Endothelial cell of umbilical vein (primary cell): ENCODE measurements at regions of chr13 and their contacts with region 1.

Region 1: DNA sequence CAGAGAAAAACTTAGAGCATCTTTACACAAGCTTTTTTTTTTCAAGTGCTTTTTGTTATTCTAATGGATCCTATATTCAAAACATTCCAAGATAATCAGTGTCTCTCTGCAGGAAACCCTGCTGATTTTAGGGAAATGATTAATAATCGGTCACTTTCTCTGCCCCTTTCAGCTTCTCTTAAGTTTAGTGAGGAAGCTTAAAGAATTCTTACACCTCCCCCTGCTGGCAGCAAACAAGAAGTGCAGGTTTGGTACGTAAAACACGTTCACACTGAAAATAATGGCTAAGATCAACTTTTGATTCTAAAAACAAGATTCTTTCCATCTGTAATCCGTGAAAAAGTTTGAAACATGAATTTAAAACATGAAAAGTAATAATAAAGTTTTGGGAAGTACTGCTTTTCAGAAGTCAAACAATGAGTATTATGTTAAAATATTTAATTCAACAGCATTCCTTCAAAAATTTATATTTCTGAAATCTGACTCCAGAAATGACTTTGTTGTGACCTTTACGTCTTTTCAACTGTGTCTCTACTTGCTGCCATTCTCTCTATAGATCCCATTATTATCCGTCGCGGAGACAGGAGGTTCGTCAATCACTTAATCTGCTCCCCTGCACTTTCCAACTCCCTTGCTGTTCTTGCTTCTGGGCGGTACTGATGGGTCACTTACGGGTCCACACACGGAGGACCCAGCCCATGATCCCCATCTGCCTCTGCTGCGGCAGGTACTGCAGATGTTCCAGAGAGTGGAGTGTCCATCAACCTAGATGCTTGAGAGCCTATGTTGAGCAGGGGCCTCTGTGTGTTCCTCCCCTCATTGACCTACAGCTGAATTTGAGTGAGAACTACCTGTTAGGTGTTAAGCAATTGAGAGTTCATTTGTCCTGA is 203.1 kb upstream of the EDNRB start:
- DNase-seq: peak; percentile 82
- H3K4me3 ChIP-seq: no peak overlapping the region
- H3K27ac ChIP-seq: no peak overlapping the region
- H3K4me1 ChIP-seq: peaks cover 8% of the 10 kb centered on the region
- H3K27me3 ChIP-seq: peaks cover 0 to under 1% of the 10 kb centered on the region in 2 experiments
- CTCF ChIP-seq: peak; percentile 62 to 68
- POLR2A ChIP-seq: no peak

Region 2: DNA sequence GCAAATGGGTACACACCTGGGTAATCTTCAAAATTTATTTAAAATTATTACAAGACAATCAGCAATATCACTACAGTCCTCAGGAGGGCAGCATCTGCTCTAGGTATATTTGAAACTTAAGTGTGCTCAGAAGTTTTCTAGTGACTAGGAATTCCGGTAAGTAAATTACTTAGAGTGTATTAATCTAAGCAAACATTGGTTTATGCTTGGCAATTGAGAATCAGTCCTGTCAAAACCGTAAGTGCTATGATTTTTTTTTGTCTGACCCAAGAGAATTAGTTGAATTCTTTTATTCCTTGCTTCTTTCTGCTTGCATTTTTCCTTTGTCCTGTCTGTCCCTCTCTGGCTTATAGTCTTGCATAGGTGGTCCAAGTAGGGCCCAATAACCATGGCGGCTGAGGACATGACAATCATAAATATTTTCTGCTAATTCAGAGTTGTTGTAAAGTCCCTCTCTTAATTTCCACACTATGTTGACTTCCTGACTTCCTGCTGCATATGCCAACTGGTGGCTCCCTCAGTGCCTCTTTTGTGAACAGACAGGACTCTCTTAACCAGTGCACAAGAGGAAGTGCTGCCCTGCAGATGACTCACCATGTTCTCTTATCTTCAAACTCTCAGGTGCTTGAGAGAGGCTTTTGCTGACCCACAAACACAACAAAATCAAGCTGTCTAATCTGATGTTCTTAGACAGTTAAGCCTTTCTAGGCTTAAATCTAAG is 342.0 kb before region 1 on chr13:
- CTCF ChIA-PET with region 1: interaction called, 149 read pairs
- POLR2A ChIA-PET with region 1: no interaction called
- dilution Hi-C with region 1: no loop called
- intact Hi-C with region 1: loop called (anchors 1 kb)
- DNase-seq: peak; percentile 86
- H3K4me3 ChIP-seq: no peak overlapping the region
- H3K27ac ChIP-seq: peak overlapping the region; percentile 46
- H3K4me1 ChIP-seq: peaks cover 8% of the 10 kb centered on the region
- H3K27me3 ChIP-seq: no peaks in the 10 kb centered on the region
- CTCF ChIP-seq: peak; percentile 38 to 45
- POLR2A ChIP-seq: no peak

Region 3: GRCh38 chr13:77810430-77810829 is 311.3 kb before region 1 on chr13:
- CTCF ChIA-PET with region 1: interaction called, 109 read pairs
- POLR2A ChIA-PET with region 1: no interaction called
- dilution Hi-C with region 1: no loop called
- intact Hi-C with region 1: loop called (anchors 1 kb)
- DNase-seq: peak; percentile 45
- H3K4me3 ChIP-seq: no peak overlapping the region
- H3K27ac ChIP-seq: no peak overlapping the region
- H3K4me1 ChIP-seq: no peaks in the 10 kb centered on the region
- H3K27me3 ChIP-seq: peaks cover 5 to 8% of the 10 kb centered on the region in 2 experiments
- CTCF ChIP-seq: peak; percentile 26 to 43
- POLR2A ChIP-seq: no peak

Region 4: DNA sequence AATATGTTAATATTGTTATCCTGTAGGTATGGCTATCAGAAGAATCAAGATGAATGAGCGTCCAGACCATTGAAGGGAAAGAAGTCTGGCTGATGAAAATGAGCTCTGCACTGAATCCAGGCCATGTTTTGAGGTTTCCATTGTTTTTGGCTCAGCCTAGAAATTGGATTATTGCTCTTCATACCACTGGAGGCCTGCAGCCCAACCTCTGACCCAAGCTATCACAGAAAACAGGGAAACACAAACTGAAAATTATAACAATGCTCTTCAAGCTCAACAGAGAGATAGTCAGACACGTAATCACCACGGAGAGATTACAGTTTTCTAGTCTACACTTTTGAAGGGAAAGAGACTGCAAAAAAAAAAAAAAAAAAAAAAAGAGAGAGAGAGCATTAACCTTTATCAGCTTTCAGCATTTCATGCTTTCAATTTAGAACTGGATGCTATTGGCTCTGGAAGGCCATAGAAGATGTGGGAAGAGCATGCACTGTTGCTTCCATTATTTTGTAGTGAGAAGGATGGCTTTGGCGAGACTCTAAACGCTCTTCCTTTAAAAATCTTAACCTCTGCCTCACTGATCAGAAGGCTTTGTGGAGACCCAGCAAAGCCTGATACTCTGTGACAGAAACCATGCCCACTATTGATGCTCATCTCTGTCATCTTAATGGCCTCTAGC is 213.9 kb before region 1 on chr13:
- CTCF ChIA-PET with region 1: interaction called, 10 read pairs
- POLR2A ChIA-PET with region 1: no interaction called
- dilution Hi-C with region 1: no loop called
- intact Hi-C with region 1: no loop called
- DNase-seq: peak; percentile 98
- H3K4me3 ChIP-seq: no peak overlapping the region
- H3K27ac ChIP-seq: peak overlapping the region; percentile 50
- H3K4me1 ChIP-seq: peaks cover 6% of the 10 kb centered on the region
- H3K27me3 ChIP-seq: no peaks in the 10 kb centered on the region
- CTCF ChIP-seq: no peak
- POLR2A ChIP-seq: no peak

Region 5: DNA sequence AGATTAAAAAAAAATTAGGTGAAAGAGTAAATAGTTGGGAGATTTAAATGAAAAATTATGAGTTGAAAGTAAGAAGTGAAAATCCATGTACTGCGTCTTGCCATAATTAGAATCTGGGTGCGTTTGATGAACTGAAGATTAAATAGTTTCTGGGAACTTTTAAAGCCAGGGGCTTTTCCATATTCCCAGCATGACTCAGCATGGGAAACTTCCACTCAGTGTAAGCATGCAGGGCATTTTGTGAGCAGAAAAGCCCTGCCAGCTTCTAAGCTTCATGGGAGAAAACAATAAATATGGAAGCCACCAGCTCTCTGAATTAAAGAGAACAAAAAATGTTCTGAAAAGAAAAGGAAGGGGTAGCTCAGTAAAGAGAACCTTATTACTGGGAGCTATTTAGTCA is 141.1 kb before region 1 on chr13:
- CTCF ChIA-PET with region 1: interaction called, 11 read pairs
- POLR2A ChIA-PET with region 1: no interaction called
- dilution Hi-C with region 1: no loop called
- intact Hi-C with region 1: no loop called
- DNase-seq: peak; percentile 86
- H3K4me3 ChIP-seq: no peak overlapping the region
- H3K27ac ChIP-seq: peak overlapping the region; percentile 31
- H3K4me1 ChIP-seq: peaks cover 10% of the 10 kb centered on the region
- H3K27me3 ChIP-seq: no peaks in the 10 kb centered on the region
- CTCF ChIP-seq: no peak
- POLR2A ChIP-seq: no peak

Region 6: DNA sequence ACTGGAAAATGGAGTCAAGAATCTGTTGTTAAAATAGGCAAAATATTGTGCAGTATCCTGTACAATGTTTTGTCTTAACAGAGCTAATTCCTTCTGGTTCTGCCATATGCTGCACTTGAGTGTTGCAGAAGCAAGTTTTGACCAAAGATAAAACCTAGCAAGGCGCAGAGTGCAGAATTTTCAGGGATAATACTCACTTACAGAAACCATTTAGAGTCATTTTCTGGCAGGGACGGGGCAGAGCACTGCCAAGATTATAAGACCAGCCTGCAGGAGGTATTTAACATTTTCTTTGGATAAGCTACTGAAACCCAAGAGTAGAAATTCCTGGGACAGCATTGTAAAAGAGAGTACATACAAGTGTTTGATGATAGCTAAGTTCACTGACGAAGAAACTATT is 43.5 kb before region 1 on chr13:
- CTCF ChIA-PET with region 1: interaction called, 10 read pairs
- POLR2A ChIA-PET with region 1: no interaction called
- dilution Hi-C with region 1: no loop called
- intact Hi-C with region 1: no loop called
- DNase-seq: no peak
- H3K4me3 ChIP-seq: no peak overlapping the region
- H3K27ac ChIP-seq: no peak overlapping the region
- H3K4me1 ChIP-seq: no peaks in the 10 kb centered on the region
- H3K27me3 ChIP-seq: no peaks in the 10 kb centered on the region
- CTCF ChIP-seq: no peak
- POLR2A ChIP-seq: no peak

Region 7: DNA sequence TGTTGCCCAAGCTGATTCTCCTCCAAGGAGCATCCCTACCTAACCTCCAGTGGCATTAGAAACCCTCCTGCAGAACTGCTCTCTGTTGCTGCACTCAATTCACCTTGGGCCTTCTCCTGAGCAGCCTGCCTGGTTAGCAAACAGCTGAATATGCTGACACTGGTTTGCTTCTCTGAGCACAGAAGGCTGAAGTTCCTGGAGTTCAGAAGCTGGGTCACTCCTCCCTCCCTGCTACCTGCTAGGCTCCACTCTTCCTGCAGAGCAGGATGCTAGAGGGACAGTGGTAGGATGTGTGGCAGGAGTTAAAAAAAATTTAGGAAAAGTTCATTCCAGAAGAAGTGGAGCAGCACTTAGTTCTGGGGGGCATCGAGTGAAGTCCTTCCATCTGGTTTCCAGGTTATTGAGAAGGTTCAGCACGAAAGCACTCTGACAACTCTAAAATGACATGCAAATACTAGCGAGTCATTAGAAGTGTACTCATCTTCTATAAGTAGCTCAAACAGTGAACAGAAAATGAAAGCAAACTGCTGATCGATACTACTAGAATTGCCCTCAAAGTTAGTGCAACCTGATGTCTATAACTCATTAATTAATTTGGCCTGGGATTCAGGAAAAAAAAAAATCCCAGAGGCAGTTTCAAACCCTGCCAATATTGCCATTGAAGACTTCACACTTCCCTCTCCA is 187.9 kb after region 1 on chr13:
- CTCF ChIA-PET with region 1: no interaction called
- POLR2A ChIA-PET with region 1: no interaction called
- dilution Hi-C with region 1: no loop called
- intact Hi-C with region 1: no loop called
- DNase-seq: no peak
- H3K4me3 ChIP-seq: no peak overlapping the region
- H3K27ac ChIP-seq: no peak overlapping the region
- H3K4me1 ChIP-seq: no peaks in the 10 kb centered on the region
- H3K27me3 ChIP-seq: peaks cover 6 to 9% of the 10 kb centered on the region in 2 experiments
- CTCF ChIP-seq: no peak
- POLR2A ChIP-seq: no peak

Region 8: GRCh38 chr13:78334059-78334458 is 212.4 kb after region 1 on chr13:
- CTCF ChIA-PET with region 1: no interaction called
- POLR2A ChIA-PET with region 1: no interaction called
- dilution Hi-C with region 1: no loop called
- intact Hi-C with region 1: no loop called
- DNase-seq: no peak
- H3K4me3 ChIP-seq: no peak overlapping the region
- H3K27ac ChIP-seq: no peak overlapping the region
- H3K4me1 ChIP-seq: no peaks in the 10 kb centered on the region
- H3K27me3 ChIP-seq: no peaks in the 10 kb centered on the region
- CTCF ChIP-seq: no peak
- POLR2A ChIP-seq: no peak

Region 9: DNA sequence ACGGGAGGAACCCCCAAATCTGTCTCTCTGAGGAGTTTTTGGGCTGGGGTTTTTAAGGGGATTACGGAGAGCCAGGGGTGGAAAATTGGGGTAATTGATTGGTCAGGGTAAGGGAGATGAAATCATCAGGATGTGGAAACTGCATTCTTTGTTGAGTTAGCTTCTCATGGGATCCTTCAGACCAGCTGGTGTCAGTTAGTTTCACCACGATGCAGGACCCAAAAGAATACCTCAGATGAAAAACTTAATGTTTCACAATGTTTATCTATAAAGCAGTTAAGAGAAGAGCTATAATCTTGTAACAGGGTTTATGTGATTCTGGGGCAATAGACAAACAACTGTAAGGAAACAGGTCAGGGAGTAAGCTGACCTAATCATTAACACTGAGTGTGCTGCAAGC is 250.9 kb after region 1 on chr13:
- CTCF ChIA-PET with region 1: no interaction called
- POLR2A ChIA-PET with region 1: no interaction called
- dilution Hi-C with region 1: no loop called
- intact Hi-C with region 1: no loop called
- DNase-seq: no peak
- H3K4me3 ChIP-seq: no peak overlapping the region
- H3K27ac ChIP-seq: no peak overlapping the region
- H3K4me1 ChIP-seq: no peaks in the 10 kb centered on the region
- H3K27me3 ChIP-seq: no peaks in the 10 kb centered on the region
- CTCF ChIP-seq: no peak
- POLR2A ChIP-seq: no peak

Region 10: GRCh38 chr13:78658635-78659449 is 537.1 kb after region 1 on chr13 and contains the start of gene OBI1:
- CTCF ChIA-PET with region 1: no interaction called
- POLR2A ChIA-PET with region 1: no interaction called
- dilution Hi-C with region 1: no loop called
- intact Hi-C with region 1: no loop called
- DNase-seq: peak; percentile 91
- H3K4me3 ChIP-seq: peak within 1 kb of the TSS; percentile 50 to 97 (median 93)
- H3K27ac ChIP-seq: peak within 1 kb of the TSS; percentile 48
- H3K4me1 ChIP-seq: peaks cover 30% of the 10 kb centered on the region
- H3K27me3 ChIP-seq: no peaks in the 10 kb centered on the region
- CTCF ChIP-seq: no peak
- POLR2A ChIP-seq: peak; percentile 60
- total RNA-seq, gene OBI1: 14.6 and 16.1 TPM in 2 replicates